ENCODE measurements at regions of chr9 and their contacts with region 1.

Region 1: DNA sequence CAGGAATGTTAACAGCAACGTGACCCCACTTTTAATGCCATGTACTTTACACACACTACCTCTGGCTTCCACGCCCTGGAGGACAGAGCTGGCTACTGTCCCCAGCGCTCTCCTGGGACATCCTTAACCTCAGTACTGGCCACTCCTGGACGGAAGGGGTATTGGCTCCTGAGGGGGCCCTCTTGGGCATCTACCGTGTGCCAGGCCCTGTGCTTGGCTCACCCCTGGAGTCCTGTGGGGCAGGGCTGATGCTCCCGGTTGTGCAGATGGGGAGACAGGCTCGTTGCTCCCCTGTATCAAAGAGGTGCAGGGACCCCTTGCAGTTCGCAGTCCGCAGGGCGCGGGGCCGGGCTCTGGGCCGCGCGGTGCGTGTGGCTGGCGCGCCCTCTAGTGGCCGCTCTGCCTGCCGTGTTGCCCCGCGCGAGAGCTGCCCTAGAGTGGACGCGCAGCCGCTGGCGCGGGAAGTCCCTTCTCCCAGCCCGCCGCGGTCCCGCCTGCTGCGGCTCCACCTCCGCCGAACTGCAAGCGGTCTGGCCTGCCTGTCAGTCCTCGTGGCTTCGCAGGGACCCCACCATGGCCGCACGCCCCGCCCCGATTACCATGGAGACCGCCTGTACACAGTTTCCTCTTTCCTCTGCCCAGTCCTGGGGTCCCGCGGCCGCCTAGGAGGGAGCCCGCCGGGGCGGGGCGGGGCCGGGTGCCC is at the start of gene WDR38:
- DNase-seq: peak; percentile 87 to 98
- ATAC-seq: peak; percentile 73 to 85
- H3K4me3 ChIP-seq: peak within 1 kb of the TSS; percentile 45
- H3K27ac ChIP-seq: peak within 1 kb of the TSS; percentile 53 to 81
- H3K4me1 ChIP-seq: peaks cover 30% of the 10 kb centered on the region
- CTCF ChIP-seq: peak; percentile 100
- EP300 ChIP-seq: no peak
- POLR2A ChIP-seq: no peak
- RAD21 ChIP-seq: peak; percentile 93 to 100
- polyA plus RNA-seq, gene WDR38: not detected in 2 replicates

Region 2: DNA sequence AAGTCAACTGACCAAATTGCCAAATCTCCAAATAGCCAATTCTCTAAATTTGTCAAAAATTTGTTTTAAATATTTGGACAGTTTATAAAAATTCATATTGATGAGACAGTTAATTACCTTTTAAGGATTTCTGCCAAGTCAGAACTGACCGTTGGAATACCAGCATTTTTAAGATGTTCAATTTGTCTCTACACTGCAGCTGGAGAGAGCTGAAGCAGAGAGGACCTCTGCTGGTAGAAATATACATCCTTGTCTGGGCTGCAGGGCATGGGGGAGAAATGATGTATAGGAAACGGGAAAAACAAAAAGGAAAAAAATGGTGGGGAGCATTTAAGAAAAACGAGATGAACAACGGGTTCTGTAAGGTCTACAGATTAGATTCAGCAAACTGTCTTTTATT is 98.7 kb before region 1 on chr9:
- CTCF ChIA-PET with region 1: interaction called, 13 read pairs
- POLR2A ChIA-PET with region 1: no interaction called
- DNase-seq: peak in 1 of 2 experiments; percentile 40
- ATAC-seq: peak; percentile 76 to 90; a peak in 4 of 6 replicates
- H3K4me3 ChIP-seq: no peak overlapping the region
- H3K27ac ChIP-seq: no peak overlapping the region
- H3K4me1 ChIP-seq: peaks cover 33% of the 10 kb centered on the region
- CTCF ChIP-seq: peak; percentile 62
- EP300 ChIP-seq: no peak
- POLR2A ChIP-seq: no peak
- RAD21 ChIP-seq: peak; percentile 57 to 71

Region 3: GRCh38 chr9:124771021-124771866 is 81.7 kb before region 1 on chr9 and contains the start of gene NR6A1:
- CTCF ChIA-PET with region 1: interaction called, 2,512 read pairs
- POLR2A ChIA-PET with region 1: interaction called, 52 read pairs
- DNase-seq: peak; percentile 97 to 98
- ATAC-seq: peak; percentile 81 to 88
- H3K4me3 ChIP-seq: peak within 1 kb of the TSS; percentile 94
- H3K27ac ChIP-seq: peak within 1 kb of the TSS; percentile 82 to 95
- H3K4me1 ChIP-seq: peaks cover 30% of the 10 kb centered on the region; the same call in 2 of the 3 replicates
- CTCF ChIP-seq: peak; percentile 38
- EP300 ChIP-seq: no peak
- POLR2A ChIP-seq: peak; percentile 24; the same call in 1 of the 2 replicates
- RAD21 ChIP-seq: no peak
- polyA plus RNA-seq, gene NR6A1: 3.3 and 4.1 TPM in 2 replicates

Region 4: DNA sequence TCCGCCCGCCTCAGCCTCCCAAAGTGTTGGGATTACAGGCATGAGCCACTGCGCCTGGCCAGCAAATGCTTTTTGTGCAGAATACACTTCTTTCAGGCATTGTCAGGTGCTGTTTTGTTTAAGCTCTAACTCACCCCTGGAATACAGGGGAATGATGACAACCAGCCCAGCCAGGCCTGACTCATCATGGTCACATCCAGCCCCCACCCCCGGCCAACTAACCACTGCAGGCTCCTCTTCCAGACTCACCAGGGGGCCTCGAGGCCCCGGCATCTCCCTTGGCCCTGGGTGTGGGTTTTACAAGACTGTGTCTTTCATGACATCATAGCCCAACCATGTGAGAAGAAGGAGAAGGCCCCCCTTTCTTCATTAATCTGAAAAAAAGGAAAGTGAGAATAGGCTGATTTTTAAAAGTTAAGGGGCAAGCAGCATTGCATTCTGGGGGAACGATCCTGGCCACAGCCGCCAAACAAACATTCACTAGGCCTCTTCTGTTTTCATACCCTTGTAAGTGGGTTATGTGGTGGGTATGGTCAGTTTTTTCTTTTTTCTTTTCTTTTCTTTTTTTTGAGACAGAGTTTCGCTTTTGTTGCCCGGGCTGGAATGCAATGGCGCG is 40.5 kb before region 1 on chr9:
- CTCF ChIA-PET with region 1: interaction called, 132 read pairs
- POLR2A ChIA-PET with region 1: interaction called, 4 read pairs
- DNase-seq: peak; percentile 86 to 95
- ATAC-seq: peak; percentile 78 to 80
- H3K4me3 ChIP-seq: no peak overlapping the region
- H3K27ac ChIP-seq: peak overlapping the region; percentile 90 to 93
- H3K4me1 ChIP-seq: peaks cover 41% of the 10 kb centered on the region
- CTCF ChIP-seq: no peak
- EP300 ChIP-seq: peak in 1 of 2 experiments; percentile 17; a peak in 1 of 5 replicates
- POLR2A ChIP-seq: no peak
- RAD21 ChIP-seq: 0 out of 5 replicates have a peak, but pooled peaks of 1 of the 2 experiments have one; percentile 1

Region 5: GRCh38 chr9:124873664-124874063 is 20.7 kb after region 1 on chr9:
- CTCF ChIA-PET with region 1: interaction called, 17 read pairs
- POLR2A ChIA-PET with region 1: interaction called, 3 read pairs
- DNase-seq: no peak
- ATAC-seq: no peak
- H3K4me3 ChIP-seq: no peak overlapping the region
- H3K27ac ChIP-seq: no peak overlapping the region
- H3K4me1 ChIP-seq: peaks cover 31% of the 10 kb centered on the region; the same call in 2 of the 3 replicates
- CTCF ChIP-seq: no peak
- EP300 ChIP-seq: no peak
- POLR2A ChIP-seq: no peak
- RAD21 ChIP-seq: no peak

Region 6: DNA sequence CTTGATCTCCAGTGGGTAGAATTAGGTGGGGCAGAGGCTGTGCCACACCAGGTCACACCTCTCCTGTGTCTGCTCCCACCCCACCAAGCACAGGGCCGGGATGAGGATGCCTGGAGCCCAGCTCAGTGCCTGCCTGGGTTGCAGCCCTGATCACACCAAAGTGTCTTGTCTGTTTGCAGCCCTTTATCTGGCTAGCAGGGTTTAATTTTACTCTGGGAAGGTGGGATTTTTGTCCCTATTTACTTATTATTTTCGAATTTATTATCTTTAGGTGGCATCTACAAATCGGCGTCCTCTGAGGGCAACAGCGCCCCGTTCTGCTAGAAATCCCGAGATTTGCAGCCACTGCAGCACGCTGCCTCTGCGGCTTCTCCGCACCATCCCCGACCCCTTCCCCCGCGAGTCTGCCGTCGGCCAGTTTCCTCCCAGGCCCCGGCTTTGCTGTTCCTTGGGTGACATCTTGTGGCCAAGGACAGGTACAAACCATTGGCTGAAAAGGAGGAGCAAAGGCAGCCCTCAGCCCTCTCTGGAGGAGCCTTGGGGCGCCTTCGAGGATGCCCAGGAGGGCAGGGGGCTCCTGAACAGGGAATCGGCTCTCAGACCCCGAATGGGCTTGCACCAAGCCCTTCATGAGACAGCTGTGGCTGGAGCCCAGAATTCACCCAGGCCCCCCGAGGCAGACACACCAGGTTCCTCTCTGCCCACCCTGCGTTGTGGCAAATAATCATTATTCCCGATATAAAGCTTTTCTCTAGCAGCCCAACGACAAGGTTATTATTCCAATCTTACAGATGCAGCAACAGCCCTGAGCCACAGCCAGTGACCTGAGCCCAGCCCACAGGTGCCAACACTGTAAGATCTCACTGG is 521.7 kb after region 1 on chr9:
- CTCF ChIA-PET with region 1: interaction called, 15 read pairs
- POLR2A ChIA-PET with region 1: no interaction called
- DNase-seq: peak; percentile 72 to 77
- ATAC-seq: peak; percentile 85 to 94
- H3K4me3 ChIP-seq: peak overlapping the region; percentile 27; the same call in 2 of the 3 replicates
- H3K27ac ChIP-seq: peak overlapping the region in 1 of 2 experiments; percentile 55; a peak in 2 of 6 replicates
- H3K4me1 ChIP-seq: peaks cover 7% of the 10 kb centered on the region; the same call in 2 of the 3 replicates
- CTCF ChIP-seq: peak; percentile 91
- EP300 ChIP-seq: no peak
- POLR2A ChIP-seq: no peak
- RAD21 ChIP-seq: peak; percentile 98

Measured in A549 (cell line).